ENCODE measurements at regions of chr22 and their contacts with region 1.

Region 1: GRCh38 chr22:41915035-41915785 is at the start of gene SHISA8:
- DNase-seq: peak; percentile 29 to 75 (median 57)
- ATAC-seq: peak; percentile 65 to 72 (median 69)
- H3K4me3 ChIP-seq: peak within 1 kb of the TSS; percentile 35 to 39
- H3K4me3 Mint-ChIP-seq: peak within 1 kb of the TSS; percentile 50 to 61 (median 50)
- H3K27ac ChIP-seq: no peak within 1 kb of the TSS
- H3K27ac Mint-ChIP-seq: no peak within 1 kb of the TSS
- H3K4me1 ChIP-seq: peaks cover 13 to 56% of the 10 kb centered on the region in 2 experiments
- H3K4me1 Mint-ChIP-seq: peaks cover 25 to 35% (median 25%) of the 10 kb centered on the region in 3 donors
- H3K27me3 ChIP-seq: peaks cover 11 to 81% of the 10 kb centered on the region in 2 experiments
- H3K27me3 Mint-ChIP-seq: peaks cover 27 to 41% of the 10 kb centered on the region in 2 donors
- total RNA-seq, gene SHISA8: 0.56 to 1.2 (median 0.75) TPM in 4 of 5 donors, not detected in the other

Region 2: DNA sequence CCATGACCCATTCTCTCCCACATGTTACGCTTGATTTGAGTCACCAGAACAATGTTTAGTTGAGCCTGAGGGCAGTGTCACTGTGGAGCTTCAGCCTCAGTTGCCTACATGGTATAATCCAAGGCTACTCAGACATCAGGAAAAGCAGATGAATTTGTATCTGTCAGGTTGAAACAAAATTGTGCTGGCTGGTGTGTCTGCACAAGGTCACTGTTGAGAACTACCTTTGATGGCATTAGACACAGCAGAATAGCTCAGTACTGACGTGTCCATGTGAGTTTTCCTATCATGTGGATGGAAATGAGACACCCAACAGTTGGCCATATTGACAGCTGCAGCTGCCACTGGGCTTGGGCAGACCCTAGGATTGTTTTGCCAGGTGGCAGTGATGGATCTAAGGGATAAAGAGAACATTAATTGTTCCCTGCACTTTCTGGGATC is 99.0 kb before region 1 on chr22:
- CTCF ChIA-PET with region 1: no interaction called
- POLR2A ChIA-PET with region 1: interaction called in 1 of 2 experiments, 13 read pairs
- DNase-seq: no peak
- ATAC-seq: no peak
- H3K4me3 ChIP-seq: no peak overlapping the region
- H3K4me3 Mint-ChIP-seq: no peak overlapping the region
- H3K27ac ChIP-seq: no peak overlapping the region
- H3K27ac Mint-ChIP-seq: peak overlapping the region in 1 of 2 donors; percentile 34
- H3K4me1 ChIP-seq: no peaks in the 10 kb centered on the region
- H3K4me1 Mint-ChIP-seq: no peaks in the 10 kb centered on the region
- H3K27me3 ChIP-seq: no peaks in the 10 kb centered on the region
- H3K27me3 Mint-ChIP-seq: no peaks in the 10 kb centered on the region

Region 3: DNA sequence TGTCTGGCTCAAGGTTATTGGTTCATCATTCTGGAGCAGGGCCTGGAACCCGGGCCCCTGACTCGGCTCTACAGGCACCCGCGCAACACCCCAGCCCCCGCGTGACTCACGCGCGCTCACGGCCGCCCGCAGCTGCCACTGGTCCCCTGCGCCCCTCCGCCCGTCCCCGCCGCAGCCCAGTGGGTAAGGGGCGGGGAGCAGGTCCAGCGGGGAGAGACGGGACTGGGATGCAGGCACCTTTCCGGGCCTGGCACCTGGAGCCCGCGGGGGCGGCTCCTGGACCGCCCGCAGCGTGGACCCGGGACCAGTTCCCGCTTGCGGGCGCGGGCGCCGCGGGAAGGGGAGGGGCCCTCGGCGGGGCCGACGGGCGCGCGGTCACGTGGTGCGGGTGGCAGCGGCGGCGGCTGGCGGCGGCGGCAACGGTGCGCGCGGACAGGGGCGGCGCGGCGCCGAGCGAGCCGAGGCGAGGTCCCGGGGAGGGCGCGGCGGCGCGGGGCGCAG is 61.2 kb after region 1 on chr22:
- CTCF ChIA-PET with region 1: no interaction called
- POLR2A ChIA-PET with region 1: no interaction called
- DNase-seq: peak in 19 of 35 experiments; percentile 7 to 66 (median 28)
- ATAC-seq: peak; percentile 73 to 88 (median 84)
- H3K4me3 ChIP-seq: peak overlapping the region; percentile 3 to 19
- H3K4me3 Mint-ChIP-seq: peak overlapping the region; percentile 55 to 72 (median 68)
- H3K27ac ChIP-seq: no peak overlapping the region
- H3K27ac Mint-ChIP-seq: no peak overlapping the region
- H3K4me1 ChIP-seq: peaks cover 0 to 14% of the 10 kb centered on the region in 2 experiments
- H3K4me1 Mint-ChIP-seq: peaks cover 0 to 14% (median 5%) of the 10 kb centered on the region in 3 donors
- H3K27me3 ChIP-seq: peaks cover 3 to 57% of the 10 kb centered on the region in 2 experiments
- H3K27me3 Mint-ChIP-seq: peaks cover 22 to 41% of the 10 kb centered on the region in 2 donors

Region 4: GRCh38 chr22:41998361-41999275 is 83.4 kb after region 1 on chr22 and contains the start of gene WBP2NL:
- CTCF ChIA-PET with region 1: no interaction called
- POLR2A ChIA-PET with region 1: interaction called in 1 of 2 experiments, 10 read pairs
- DNase-seq: peak; percentile 66 to 93 (median 84)
- ATAC-seq: peak; percentile 95 to 96 (median 96)
- H3K4me3 ChIP-seq: peak within 1 kb of the TSS; percentile 67 to 74
- H3K4me3 Mint-ChIP-seq: peak within 1 kb of the TSS; percentile 89 to 98 (median 92)
- H3K27ac ChIP-seq: peak within 1 kb of the TSS; percentile 62
- H3K27ac Mint-ChIP-seq: peak within 1 kb of the TSS; percentile 95
- H3K4me1 ChIP-seq: peaks cover 2 to 23% of the 10 kb centered on the region in 2 experiments
- H3K4me1 Mint-ChIP-seq: peaks cover 23 to 25% (median 23%) of the 10 kb centered on the region in 3 donors
- H3K27me3 ChIP-seq: peaks cover 0 to 13% of the 10 kb centered on the region in 2 experiments
- H3K27me3 Mint-ChIP-seq: no peaks in the 10 kb centered on the region
- total RNA-seq, gene WBP2NL: 1.5 to 2.8 (median 2.2) TPM